Activated CD4-positive, alpha-beta T cell treated with anti-CD3 and anti-CD28 coated beads, Interleukin-2, amount 10 ng/mL, durations not matched to agents 24 days and 14 days (primary cell): ENCODE measurements at regions of chr18 and their contacts with region 1.

Region 1: GRCh38 chr18:45874491-45875184 is 49.2 kb downstream of the SIGLEC15 start:
- DNase-seq: peak; percentile 89
- H3K4me3 Mint-ChIP-seq: peak overlapping the region; percentile 58
- H3K27ac Mint-ChIP-seq: peak overlapping the region; percentile 94
- H3K4me1 Mint-ChIP-seq: peaks cover 20% of the 10 kb centered on the region
- H3K27me3 Mint-ChIP-seq: no peaks in the 10 kb centered on the region

Region 2: GRCh38 chr18:45670281-45670962 is 204.2 kb before region 1 on chr18:
- intact Hi-C with region 1: loop called (anchors 1 kb)
- DNase-seq: peak; percentile 79
- H3K4me3 Mint-ChIP-seq: peak overlapping the region; percentile 53
- H3K27ac Mint-ChIP-seq: peak overlapping the region; percentile 70
- H3K4me1 Mint-ChIP-seq: peaks cover 50% of the 10 kb centered on the region
- H3K27me3 Mint-ChIP-seq: peaks cover 26% of the 10 kb centered on the region

Region 3: DNA sequence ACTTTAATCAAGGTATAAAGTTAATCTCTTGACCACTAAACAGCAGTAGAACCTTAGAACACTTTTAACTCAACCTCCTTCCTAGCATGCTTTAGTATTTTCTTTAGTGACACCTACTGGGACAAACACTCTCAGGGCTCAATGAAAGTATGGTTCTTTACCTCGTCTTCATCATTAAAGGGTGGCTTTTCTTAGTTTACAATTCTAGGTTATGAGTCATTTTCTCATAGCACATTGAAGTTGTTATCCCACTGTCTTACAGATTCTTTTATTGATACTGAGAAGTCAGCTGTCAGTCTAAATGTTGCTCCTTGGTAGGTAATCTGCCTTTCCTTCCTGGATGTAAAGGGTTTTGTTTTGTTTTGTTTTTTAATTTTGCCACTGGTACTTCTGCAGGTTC is 11.2 kb before region 1 on chr18:
- intact Hi-C with region 1: loop called (anchors 1 kb)
- DNase-seq: no peak
- H3K4me3 Mint-ChIP-seq: no peak overlapping the region
- H3K27ac Mint-ChIP-seq: no peak overlapping the region
- H3K4me1 Mint-ChIP-seq: peaks cover 4% of the 10 kb centered on the region
- H3K27me3 Mint-ChIP-seq: no peaks in the 10 kb centered on the region

Region 4: DNA sequence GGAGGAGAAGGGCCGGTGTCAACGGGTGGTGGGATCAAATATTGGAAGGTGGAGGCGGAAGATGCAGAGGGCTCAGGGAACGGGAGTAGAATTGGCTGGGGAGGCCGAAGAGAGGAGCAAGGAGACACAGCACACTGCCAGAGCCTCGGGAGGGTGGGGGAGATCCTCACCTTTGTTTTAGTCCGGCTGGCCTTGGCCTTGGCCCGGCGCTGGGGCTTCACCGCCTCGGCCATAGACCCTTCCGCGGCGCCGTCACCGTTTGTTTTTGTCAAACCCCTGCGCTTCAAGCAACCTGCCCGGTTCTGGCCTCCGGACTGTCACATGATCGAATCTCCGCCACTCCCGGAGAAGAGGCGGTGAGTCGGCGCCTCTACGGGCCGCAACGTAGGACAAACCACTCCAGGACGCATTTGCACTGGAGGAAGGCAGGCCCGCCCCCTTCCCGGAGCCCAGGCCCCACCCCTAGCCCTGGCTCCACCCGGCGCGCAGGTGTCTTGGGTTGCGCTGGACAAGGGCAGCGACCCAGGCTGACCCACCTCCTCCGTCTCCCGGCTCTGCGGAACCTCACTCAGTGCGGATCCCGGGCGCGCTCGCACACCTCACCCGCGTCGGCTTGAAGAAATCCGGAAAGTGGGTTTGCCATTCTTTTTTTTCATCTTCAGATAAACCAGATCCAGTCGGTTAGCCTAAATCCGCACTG is 92.5 kb after region 1 on chr18 and contains the start of gene EPG5:
- intact Hi-C with region 1: loop called (anchors 2 kb)
- DNase-seq: peak; percentile 98
- H3K4me3 Mint-ChIP-seq: peak within 1 kb of the TSS; percentile 99
- H3K27ac Mint-ChIP-seq: peak within 1 kb of the TSS; percentile 94
- H3K4me1 Mint-ChIP-seq: peaks cover 26% of the 10 kb centered on the region
- H3K27me3 Mint-ChIP-seq: peaks cover 3% of the 10 kb centered on the region
- total RNA-seq, gene EPG5: 14.9 and 15.5 TPM in 2 replicates

Region 5: GRCh38 chr18:46155641-46156051 is 281.0 kb after region 1 on chr18:
- intact Hi-C with region 1: no loop called
- DNase-seq: peak; percentile 90
- H3K4me3 Mint-ChIP-seq: peak overlapping the region; percentile 64
- H3K27ac Mint-ChIP-seq: peak overlapping the region; percentile 87
- H3K4me1 Mint-ChIP-seq: peaks cover 65% of the 10 kb centered on the region
- H3K27me3 Mint-ChIP-seq: no peaks in the 10 kb centered on the region